Activated naive CD4-positive, alpha-beta T cell treated with anti-CD3 and anti-CD28 coated beads for 36 hours (primary cell): ENCODE measurements at regions of chr13 and their contacts with region 1.

Region 1: DNA sequence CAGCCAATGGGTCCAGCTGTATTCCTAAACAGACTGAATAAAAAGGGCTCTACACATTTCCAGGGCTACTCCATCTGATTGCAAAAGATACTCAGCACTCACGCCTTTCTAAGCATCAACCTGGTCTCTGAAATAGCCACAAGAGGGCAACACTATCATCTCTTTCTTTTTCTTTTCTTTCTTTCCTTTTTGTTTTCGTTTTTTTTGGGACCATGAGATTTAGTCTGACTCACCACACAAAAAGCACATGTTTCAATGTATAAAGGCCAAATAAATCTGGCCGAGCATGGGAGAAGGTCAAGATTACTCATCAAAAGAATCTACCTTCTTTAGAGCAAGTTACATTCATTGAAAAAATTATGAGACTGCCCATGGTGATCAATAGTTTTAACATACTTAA is 805.6 kb upstream of the ARGLU1 start:
- DNase-seq: no peak
- H3K4me3 Mint-ChIP-seq: no peak overlapping the region
- H3K27ac Mint-ChIP-seq: no peak overlapping the region
- H3K4me1 Mint-ChIP-seq: no peaks in the 10 kb centered on the region
- H3K27me3 Mint-ChIP-seq: no peaks in the 10 kb centered on the region

Region 2: GRCh38 chr13:107650081-107650701 is 276.6 kb after region 1 on chr13:
- CTCF ChIA-PET with region 1: no interaction called
- intact Hi-C with region 1: loop called (anchors 1 kb)
- DNase-seq: peak; percentile 33
- H3K4me3 Mint-ChIP-seq: no peak overlapping the region
- H3K27ac Mint-ChIP-seq: no peak overlapping the region
- H3K4me1 Mint-ChIP-seq: no peaks in the 10 kb centered on the region
- H3K27me3 Mint-ChIP-seq: peaks cover 2% of the 10 kb centered on the region

Region 3: GRCh38 chr13:107867701-107868661 is 494.4 kb after region 1 on chr13:
- CTCF ChIA-PET with region 1: no interaction called
- intact Hi-C with region 1: loop called (anchors 5 kb)
- DNase-seq: peak; percentile 16
- H3K4me3 Mint-ChIP-seq: peak overlapping the region; percentile 61
- H3K27ac Mint-ChIP-seq: no peak overlapping the region
- H3K4me1 Mint-ChIP-seq: peaks cover 14% of the 10 kb centered on the region
- H3K27me3 Mint-ChIP-seq: peaks cover 49% of the 10 kb centered on the region